ENCODE measurements at regions of chr7 and their contacts with region 1.

Region 1: DNA sequence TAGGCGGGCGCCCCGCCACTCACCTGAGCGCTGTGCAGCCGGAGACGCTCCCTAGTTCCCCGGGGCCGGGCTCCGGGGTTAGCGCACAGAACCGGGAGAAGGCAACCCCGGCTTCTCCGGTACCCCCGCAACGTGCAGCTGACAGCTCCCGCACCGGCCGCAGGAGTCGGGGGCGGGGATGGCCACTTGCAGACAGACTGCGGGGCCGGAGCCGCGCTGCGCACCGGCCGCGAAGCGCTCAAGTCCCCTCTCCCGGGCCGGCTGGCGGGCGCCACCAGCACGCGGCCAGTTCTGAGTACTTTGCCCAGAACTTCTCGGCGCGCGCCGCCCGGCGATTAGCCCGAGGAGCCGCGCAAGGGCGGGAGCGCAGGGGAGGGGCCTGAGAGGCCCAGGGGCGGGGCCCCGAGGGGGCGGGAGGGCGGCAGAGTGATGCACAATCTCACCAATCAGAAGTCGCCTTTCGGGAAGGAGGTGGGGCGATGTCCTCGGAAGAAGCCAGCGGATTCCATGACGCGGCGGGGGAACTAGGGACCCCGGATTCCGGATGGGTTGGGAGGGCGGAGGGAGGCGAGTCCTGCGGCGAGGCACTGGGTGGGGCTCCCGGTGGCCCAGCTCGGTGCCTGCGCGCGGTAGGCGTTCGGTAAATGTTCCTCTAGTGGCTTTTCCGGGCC is at the start of gene OSBPL3:
- DNase-seq: peak; percentile 95
- H3K4me3 Mint-ChIP-seq: peak within 1 kb of the TSS; percentile 87
- H3K27ac Mint-ChIP-seq: peak within 1 kb of the TSS; percentile 85
- H3K4me1 Mint-ChIP-seq: peaks cover 47% of the 10 kb centered on the region
- H3K27me3 Mint-ChIP-seq: no peaks in the 10 kb centered on the region
- total RNA-seq, gene OSBPL3: 25.1 to 27.9 TPM

Region 2: GRCh38 chr7:24757353-24758275 is 222.4 kb before region 1 on chr7 and contains the start of gene GSDME:
- CTCF ChIA-PET with region 1: no interaction called
- intact Hi-C with region 1: loop called (anchors 1 kb)
- DNase-seq: no peak
- H3K4me3 Mint-ChIP-seq: peak within 1 kb of the TSS; percentile 85
- H3K27ac Mint-ChIP-seq: peak within 1 kb of the TSS; percentile 88
- H3K4me1 Mint-ChIP-seq: peaks cover 33% of the 10 kb centered on the region
- H3K27me3 Mint-ChIP-seq: peaks cover 39% of the 10 kb centered on the region
- total RNA-seq, gene GSDME: 6.8 to 6.9 TPM

Region 3: GRCh38 chr7:24907311-24907886 is 72.6 kb before region 1 on chr7:
- CTCF ChIA-PET with region 1: interaction called, 8 read pairs
- intact Hi-C with region 1: loop called (anchors 1 kb)
- DNase-seq: peak; percentile 48
- H3K4me3 Mint-ChIP-seq: no peak overlapping the region
- H3K27ac Mint-ChIP-seq: no peak overlapping the region
- H3K4me1 Mint-ChIP-seq: peaks cover 34% of the 10 kb centered on the region
- H3K27me3 Mint-ChIP-seq: no peaks in the 10 kb centered on the region

Region 4: GRCh38 chr7:25028370-25029021 is 48.5 kb after region 1 on chr7:
- CTCF ChIA-PET with region 1: interaction called, 3 read pairs
- intact Hi-C with region 1: loop called (anchors 1 kb)
- DNase-seq: peak; percentile 38
- H3K4me3 Mint-ChIP-seq: no peak overlapping the region
- H3K27ac Mint-ChIP-seq: peak overlapping the region; percentile 79
- H3K4me1 Mint-ChIP-seq: peaks cover 37% of the 10 kb centered on the region
- H3K27me3 Mint-ChIP-seq: no peaks in the 10 kb centered on the region

Region 5: GRCh38 chr7:25075459-25075858 is 95.5 kb after region 1 on chr7:
- CTCF ChIA-PET with region 1: interaction called, 22 read pairs
- intact Hi-C with region 1: loop called (anchors 1 kb)
- DNase-seq: peak; percentile 71
- H3K4me3 Mint-ChIP-seq: no peak overlapping the region
- H3K27ac Mint-ChIP-seq: no peak overlapping the region
- H3K4me1 Mint-ChIP-seq: peaks cover 16% of the 10 kb centered on the region
- H3K27me3 Mint-ChIP-seq: peaks cover 4% of the 10 kb centered on the region

Region 6: DNA sequence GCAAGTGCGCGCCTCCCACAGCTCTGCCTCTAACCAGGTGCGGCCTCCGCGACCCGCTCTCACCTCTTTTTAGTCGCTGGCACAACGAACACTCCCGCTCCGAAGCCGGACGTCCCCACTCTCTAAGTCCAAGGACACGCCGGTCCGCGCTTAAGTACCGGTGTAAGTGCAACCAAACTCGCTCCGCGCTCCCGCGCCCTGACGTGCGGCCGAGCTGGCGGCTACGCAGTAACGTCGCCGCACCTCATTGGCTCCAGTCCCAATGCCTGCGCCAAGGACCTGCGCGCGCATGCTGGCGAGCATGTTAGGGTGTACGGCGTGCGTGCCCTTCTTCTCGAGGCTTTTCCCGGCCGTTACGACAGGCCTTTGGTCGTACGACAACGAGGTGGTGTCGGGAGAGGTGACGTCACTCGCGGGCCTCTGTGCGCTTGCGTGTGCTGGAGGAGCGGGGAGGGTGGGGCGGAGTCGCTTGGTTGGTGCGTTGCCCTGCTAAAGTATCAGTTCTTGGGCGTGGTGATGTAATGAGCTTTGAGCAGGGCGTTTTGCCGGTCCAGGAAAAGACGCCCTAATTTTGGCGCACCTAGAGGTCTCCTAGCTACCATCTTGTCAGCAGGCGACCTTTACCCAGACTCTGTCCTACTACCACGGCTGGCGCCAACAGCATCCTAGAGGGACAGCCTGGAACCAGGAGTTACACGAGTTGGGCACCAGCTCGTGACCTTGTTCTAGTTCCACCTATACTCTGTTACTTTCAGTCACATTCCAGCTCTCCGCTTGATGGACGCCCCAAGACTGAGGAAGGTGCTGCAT is 145.3 kb after region 1 on chr7 and contains the start of gene CYCS:
- CTCF ChIA-PET with region 1: no interaction called
- intact Hi-C with region 1: loop called (anchors 1 kb)
- DNase-seq: peak; percentile 100
- H3K4me3 Mint-ChIP-seq: peak within 1 kb of the TSS; percentile 93
- H3K27ac Mint-ChIP-seq: peak within 1 kb of the TSS; percentile 98
- H3K4me1 Mint-ChIP-seq: peaks cover 31% of the 10 kb centered on the region
- H3K27me3 Mint-ChIP-seq: no peaks in the 10 kb centered on the region
- total RNA-seq, gene CYCS: 213 to 224 TPM

Measured in activated naive CD4-positive, alpha-beta T cell treated with anti-CD3 and anti-CD28 coated beads for 36 hours (primary cell).